HepG2 (cell line): ENCODE measurements at regions of chr6 and their contacts with region 1.

Region 1: GRCh38 chr6:132669690-132670291 is 10.8 kb upstream of the TAAR1 start:
- DNase-seq: peak; percentile 20
- ATAC-seq: peak; percentile 72
- H3K4me3 ChIP-seq: no peak overlapping the region
- H3K27ac ChIP-seq: no peak overlapping the region
- H3K4me1 ChIP-seq: peaks cover 24% of the 10 kb centered on the region
- H3K27me3 ChIP-seq: no peaks in the 10 kb centered on the region; a peak in 1 of 5 replicates
- CTCF ChIP-seq: peak; percentile 68
- EP300 ChIP-seq: no peak
- POLR2A ChIP-seq: no peak
- RAD21 ChIP-seq: peak; percentile 49; the same call in 1 of the 2 replicates

Region 2: GRCh38 chr6:132530293-132530974 is 139.4 kb before region 1 on chr6:
- CTCF ChIA-PET with region 1: no interaction called
- POLR2A ChIA-PET with region 1: no interaction called
- in situ Hi-C with region 1: no loop called
- intact Hi-C with region 1: loop called (anchors 5 kb)
- DNase-seq: peak; percentile 72
- ATAC-seq: peak; percentile 90
- H3K4me3 ChIP-seq: peak overlapping the region in 2 of 3 experiments; percentile 29 to 58; a peak in 4 of 6 replicates
- H3K27ac ChIP-seq: no peak overlapping the region
- H3K4me1 ChIP-seq: peaks cover 25% of the 10 kb centered on the region
- H3K27me3 ChIP-seq: peaks cover 0 to 6% of the 10 kb centered on the region in 2 experiments; a peak in 2 of 5 replicates
- CTCF ChIP-seq: peak; percentile 81
- EP300 ChIP-seq: no peak
- POLR2A ChIP-seq: no peak
- RAD21 ChIP-seq: peak; percentile 68; the same call in 1 of the 2 replicates

Region 3: GRCh38 chr6:132633362-132633761 is 36.4 kb before region 1 on chr6:
- CTCF ChIA-PET with region 1: no interaction called
- POLR2A ChIA-PET with region 1: no interaction called
- in situ Hi-C with region 1: no loop called
- intact Hi-C with region 1: no loop called
- DNase-seq: no peak
- ATAC-seq: no peak; the same call in 2 of the 3 replicates
- H3K4me3 ChIP-seq: no peak overlapping the region
- H3K27ac ChIP-seq: no peak overlapping the region
- H3K4me1 ChIP-seq: peaks cover 20% of the 10 kb centered on the region
- H3K27me3 ChIP-seq: no peaks in the 10 kb centered on the region
- CTCF ChIP-seq: no peak
- EP300 ChIP-seq: no peak
- POLR2A ChIP-seq: no peak
- RAD21 ChIP-seq: no peak

Region 4: GRCh38 chr6:132651062-132651461 is 18.7 kb before region 1 on chr6:
- CTCF ChIA-PET with region 1: no interaction called
- POLR2A ChIA-PET with region 1: no interaction called
- in situ Hi-C with region 1: no loop called
- intact Hi-C with region 1: no loop called
- DNase-seq: no peak
- ATAC-seq: no peak
- H3K4me3 ChIP-seq: no peak overlapping the region
- H3K27ac ChIP-seq: no peak overlapping the region
- H3K4me1 ChIP-seq: no peaks in the 10 kb centered on the region
- H3K27me3 ChIP-seq: 0 out of 5 replicates have a peak, but pooled peaks cover 0 to 4% of the 10 kb centered on the region in 2 experiments
- CTCF ChIP-seq: no peak
- EP300 ChIP-seq: no peak
- POLR2A ChIP-seq: no peak
- RAD21 ChIP-seq: no peak

Region 5: GRCh38 chr6:132715204-132715603 is 45.4 kb after region 1 on chr6:
- CTCF ChIA-PET with region 1: no interaction called
- POLR2A ChIA-PET with region 1: no interaction called
- in situ Hi-C with region 1: no loop called
- intact Hi-C with region 1: loop called (anchors 1 kb)
- DNase-seq: peak; percentile 65
- ATAC-seq: peak; percentile 97
- H3K4me3 ChIP-seq: no peak overlapping the region
- H3K27ac ChIP-seq: no peak overlapping the region
- H3K4me1 ChIP-seq: peaks cover 29% of the 10 kb centered on the region
- H3K27me3 ChIP-seq: no peaks in the 10 kb centered on the region
- CTCF ChIP-seq: peak; percentile 86
- EP300 ChIP-seq: no peak
- POLR2A ChIP-seq: no peak
- RAD21 ChIP-seq: peak; percentile 75

Region 6: GRCh38 chr6:132734694-132735635 is 65.2 kb after region 1 on chr6:
- CTCF ChIA-PET with region 1: no interaction called
- POLR2A ChIA-PET with region 1: no interaction called
- in situ Hi-C with region 1: no loop called
- intact Hi-C with region 1: no loop called
- DNase-seq: peak; percentile 78
- ATAC-seq: peak; percentile 92
- H3K4me3 ChIP-seq: no peak overlapping the region
- H3K27ac ChIP-seq: no peak overlapping the region
- H3K4me1 ChIP-seq: peaks cover 47% of the 10 kb centered on the region
- H3K27me3 ChIP-seq: no peaks in the 10 kb centered on the region
- CTCF ChIP-seq: peak; percentile 32; the same call in 1 of the 2 replicates
- EP300 ChIP-seq: peak; percentile 93 to 94; a peak in 3 of 4 replicates
- POLR2A ChIP-seq: no peak
- RAD21 ChIP-seq: no peak

Region 7: DNA sequence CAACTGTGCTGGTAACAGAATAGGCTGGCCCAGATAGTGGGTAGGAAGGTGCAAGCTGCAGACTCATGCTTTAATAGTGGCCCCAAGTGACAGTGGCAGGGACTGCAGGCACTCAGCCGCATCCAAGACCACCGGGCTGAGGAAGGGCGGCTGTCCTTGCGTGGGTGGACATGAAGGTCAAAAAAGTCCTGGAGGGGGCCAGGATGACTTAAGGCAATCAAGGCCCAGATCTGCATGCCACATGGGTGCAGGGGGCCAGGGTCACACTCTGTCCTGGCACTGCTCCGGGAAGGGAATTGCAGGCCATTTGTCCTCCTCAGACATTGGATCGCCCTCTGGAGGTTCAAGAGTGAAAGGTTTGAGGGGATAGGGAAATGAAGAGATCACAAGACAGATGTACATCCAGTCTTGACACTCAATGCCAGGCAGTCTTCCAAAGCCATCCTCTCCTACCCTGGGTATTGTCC is 98.3 kb after region 1 on chr6:
- CTCF ChIA-PET with region 1: interaction called, 80 read pairs
- POLR2A ChIA-PET with region 1: no interaction called
- in situ Hi-C with region 1: loop called (anchors 5 kb)
- intact Hi-C with region 1: loop called (anchors 1 kb)
- DNase-seq: peak; percentile 55
- ATAC-seq: peak; percentile 100
- H3K4me3 ChIP-seq: peak overlapping the region; percentile 10 to 68 (median 29); a peak in 4 of 6 replicates
- H3K27ac ChIP-seq: no peak overlapping the region
- H3K4me1 ChIP-seq: no peaks in the 10 kb centered on the region
- H3K27me3 ChIP-seq: no peaks in the 10 kb centered on the region
- CTCF ChIP-seq: peak; percentile 92
- EP300 ChIP-seq: no peak
- POLR2A ChIP-seq: no peak
- RAD21 ChIP-seq: peak; percentile 93

Region 8: GRCh38 chr6:132780770-132781371 is 111.1 kb after region 1 on chr6:
- CTCF ChIA-PET with region 1: no interaction called
- POLR2A ChIA-PET with region 1: no interaction called
- in situ Hi-C with region 1: no loop called
- intact Hi-C with region 1: loop called (anchors 5 kb)
- DNase-seq: peak; percentile 19
- ATAC-seq: peak; percentile 80
- H3K4me3 ChIP-seq: no peak overlapping the region
- H3K27ac ChIP-seq: no peak overlapping the region
- H3K4me1 ChIP-seq: no peaks in the 10 kb centered on the region
- H3K27me3 ChIP-seq: no peaks in the 10 kb centered on the region
- CTCF ChIP-seq: peak; percentile 38; the same call in 1 of the 2 replicates
- EP300 ChIP-seq: no peak
- POLR2A ChIP-seq: no peak
- RAD21 ChIP-seq: no peak

Region 9: DNA sequence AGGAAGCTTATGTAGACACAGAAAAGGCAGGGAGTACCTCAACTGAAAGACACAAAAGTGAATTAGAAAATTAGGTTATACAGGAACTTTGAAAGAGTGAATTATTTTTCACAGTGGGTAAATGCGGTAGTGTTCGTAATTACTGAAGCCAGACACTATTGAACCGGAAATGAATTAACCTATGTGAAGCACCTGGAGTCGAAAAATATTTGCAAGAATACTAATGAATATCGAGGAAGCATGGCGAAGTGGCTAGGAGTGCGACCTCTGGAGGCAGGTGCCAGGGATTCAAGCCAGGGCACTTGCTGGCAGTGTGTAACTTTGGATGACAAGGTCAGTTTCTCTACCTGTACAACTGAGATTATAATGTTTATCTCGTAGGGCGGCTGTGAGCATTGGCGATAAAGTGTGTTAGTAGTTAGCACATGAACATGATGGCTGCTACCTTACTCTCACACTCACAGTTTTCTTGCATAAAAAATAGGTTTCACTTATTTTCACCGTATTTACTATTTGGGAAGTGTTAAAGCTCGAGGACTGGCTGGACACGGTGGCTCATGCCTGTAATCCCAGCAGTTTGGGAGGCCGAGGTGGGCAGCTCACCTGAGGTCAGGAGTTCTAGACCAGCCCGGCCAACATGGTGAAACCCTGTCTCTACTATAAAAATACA is 129.2 kb after region 1 on chr6:
- CTCF ChIA-PET with region 1: interaction called, 11 read pairs
- POLR2A ChIA-PET with region 1: no interaction called
- in situ Hi-C with region 1: no loop called
- intact Hi-C with region 1: loop called (anchors 1 kb)
- DNase-seq: peak; percentile 83
- ATAC-seq: no peak
- H3K4me3 ChIP-seq: peak overlapping the region in 2 of 3 experiments; percentile 84 to 89; a peak in 4 of 6 replicates
- H3K27ac ChIP-seq: peak overlapping the region; percentile 45
- H3K4me1 ChIP-seq: 0 out of 2 replicates have a peak, but pooled peaks cover 4% of the 10 kb centered on the region
- H3K27me3 ChIP-seq: no peaks in the 10 kb centered on the region
- CTCF ChIP-seq: peak; percentile 93
- EP300 ChIP-seq: no peak
- POLR2A ChIP-seq: peak in 1 of 2 experiments; percentile 21; a peak in 1 of 4 replicates
- RAD21 ChIP-seq: no peak; the same call in 1 of the 2 replicates